CD8-positive, alpha-beta memory T cell (primary cell): ENCODE measurements at regions of chr16 and their contacts with region 1.

Region 1: DNA sequence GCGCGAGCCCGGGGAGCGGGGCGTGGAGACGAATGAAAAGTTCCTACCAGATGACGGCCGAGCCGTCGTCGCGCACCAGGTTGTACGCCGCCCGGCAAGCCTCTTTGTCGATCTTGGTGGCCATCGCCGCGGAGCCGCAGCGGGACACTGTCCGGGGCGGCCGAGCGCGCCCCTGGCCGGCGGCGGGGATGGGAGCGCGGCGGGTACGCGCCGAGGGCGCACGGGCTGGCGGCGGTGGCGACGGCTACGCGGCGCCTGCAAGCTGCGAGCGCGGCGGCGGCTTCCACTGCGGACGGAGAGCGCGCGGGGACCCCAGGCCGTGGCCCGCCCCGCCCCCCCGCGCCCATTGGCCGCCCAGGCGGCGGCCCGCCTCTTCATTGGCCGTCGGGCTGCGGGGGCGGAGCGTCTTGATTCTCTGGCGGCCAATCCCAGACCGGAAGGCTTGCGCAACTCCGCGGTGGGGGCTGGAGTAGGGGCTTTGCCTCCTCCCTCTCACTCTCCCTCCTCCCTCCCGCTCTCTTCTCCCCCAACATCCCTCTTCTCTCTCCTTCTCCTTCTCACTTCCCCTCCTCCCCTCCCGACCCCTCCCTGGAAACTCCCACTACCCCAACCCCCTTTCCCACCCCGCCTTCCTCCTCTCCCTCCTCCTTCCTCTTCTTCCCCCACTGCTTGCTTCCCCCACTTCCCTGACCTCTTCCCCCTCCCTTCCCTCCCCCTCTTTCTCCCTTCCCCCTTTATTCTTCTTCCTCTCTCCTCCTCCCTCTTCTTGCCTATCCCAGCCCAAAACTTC is at the start of gene COTL1:
- DNase-seq: peak; percentile 89 to 96 (median 91)
- H3K4me3 ChIP-seq: peak within 1 kb of the TSS; percentile 86
- H3K4me3 Mint-ChIP-seq: peak within 1 kb of the TSS; percentile 93 to 98 (median 96)
- H3K27ac ChIP-seq: peak within 1 kb of the TSS; percentile 81
- H3K27ac Mint-ChIP-seq: peak within 1 kb of the TSS; percentile 85 to 97 (median 92)
- H3K4me1 ChIP-seq: peaks cover 42% of the 10 kb centered on the region
- H3K4me1 Mint-ChIP-seq: peaks cover 45 to 54% (median 52%) of the 10 kb centered on the region in 3 donors
- H3K27me3 ChIP-seq: no peaks in the 10 kb centered on the region
- H3K27me3 Mint-ChIP-seq: peaks cover 0 to 3% of the 10 kb centered on the region in 2 donors
- total RNA-seq, gene COTL1: 373 to 388 TPM

Region 2: DNA sequence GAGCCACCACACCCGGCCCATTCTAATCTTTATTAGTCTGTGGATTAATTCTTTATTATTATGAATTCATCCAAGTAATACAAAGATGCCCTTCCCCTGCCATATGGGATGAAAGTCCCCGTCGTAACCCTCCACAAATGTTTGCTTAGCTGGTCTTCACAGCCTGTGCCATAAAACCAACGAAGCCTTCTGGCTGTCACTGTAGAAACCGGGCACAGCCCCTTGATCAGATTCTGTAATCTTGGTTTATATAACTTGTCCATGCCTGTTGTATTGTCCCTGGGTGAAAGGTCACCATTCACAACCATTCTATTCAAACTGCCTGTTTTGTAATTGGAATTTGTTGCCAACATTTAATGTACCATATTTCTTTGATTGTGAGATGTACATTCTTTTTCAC is 183.2 kb before region 1 on chr16:
- CTCF ChIA-PET with region 1: no interaction called
- POLR2A ChIA-PET with region 1: no interaction called
- DNase-seq: no peak
- H3K4me3 ChIP-seq: no peak overlapping the region
- H3K4me3 Mint-ChIP-seq: no peak overlapping the region
- H3K27ac ChIP-seq: no peak overlapping the region
- H3K27ac Mint-ChIP-seq: no peak overlapping the region
- H3K4me1 ChIP-seq: no peaks in the 10 kb centered on the region
- H3K4me1 Mint-ChIP-seq: no peaks in the 10 kb centered on the region
- H3K27me3 ChIP-seq: no peaks in the 10 kb centered on the region
- H3K27me3 Mint-ChIP-seq: peaks cover 18 to 20% of the 10 kb centered on the region in 2 donors

Region 3: DNA sequence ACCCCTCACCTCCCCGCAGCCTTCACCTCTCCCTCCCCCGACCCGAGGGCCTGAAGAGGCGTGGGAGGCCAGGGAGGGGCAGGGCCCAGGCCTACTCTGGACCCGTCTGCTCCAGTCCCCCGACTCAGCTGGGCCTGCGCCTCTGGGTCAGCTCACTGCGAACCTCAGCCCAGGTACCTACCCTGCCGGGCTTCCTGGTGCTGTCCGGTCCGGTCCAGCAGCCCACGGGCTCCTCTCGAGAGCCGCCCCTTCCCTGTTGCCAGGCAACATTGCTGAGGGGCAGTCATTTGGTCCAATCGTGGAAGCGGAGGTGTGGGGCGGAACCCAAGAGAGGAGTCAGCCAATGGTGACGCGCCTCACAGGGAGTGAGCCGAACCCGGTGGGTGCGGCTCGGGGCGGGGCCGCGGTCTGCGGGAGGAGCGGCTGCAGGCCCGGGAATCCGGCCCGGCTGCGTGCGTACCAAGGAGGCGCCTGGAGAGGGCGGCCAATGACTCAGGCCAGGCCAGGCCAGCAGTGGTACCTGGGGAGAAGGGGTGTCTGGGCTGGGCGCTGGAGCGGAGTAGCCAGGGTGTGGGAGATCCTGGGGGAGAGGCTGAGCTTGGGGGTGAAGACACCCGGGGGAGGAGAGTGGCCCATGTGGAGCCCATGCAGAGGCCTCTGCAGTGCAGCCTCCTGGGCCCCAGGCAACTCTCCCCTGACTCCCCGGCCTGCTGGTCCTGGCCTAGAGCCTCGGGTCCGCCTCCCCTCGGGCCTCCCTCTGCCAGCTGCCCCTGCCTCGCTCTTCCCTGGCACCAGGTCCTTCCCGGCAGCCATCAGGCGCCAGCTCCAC is 113.4 kb before region 1 on chr16 and contains the start of gene MEAK7:
- CTCF ChIA-PET with region 1: interaction called, 118 read pairs
- POLR2A ChIA-PET with region 1: interaction called, 5 read pairs
- DNase-seq: peak; percentile 94 to 98 (median 97)
- H3K4me3 ChIP-seq: peak within 1 kb of the TSS; percentile 95
- H3K4me3 Mint-ChIP-seq: peak within 1 kb of the TSS; percentile 83 to 96 (median 88)
- H3K27ac ChIP-seq: peak within 1 kb of the TSS; percentile 73
- H3K27ac Mint-ChIP-seq: peak within 1 kb of the TSS; percentile 6 to 97 (median 87)
- H3K4me1 ChIP-seq: peaks cover 56% of the 10 kb centered on the region
- H3K4me1 Mint-ChIP-seq: peaks cover 40 to 62% (median 52%) of the 10 kb centered on the region in 3 donors
- H3K27me3 ChIP-seq: no peaks in the 10 kb centered on the region
- H3K27me3 Mint-ChIP-seq: no peaks in the 10 kb centered on the region
- total RNA-seq, gene MEAK7: 6.7 to 7.7 TPM

Region 4: DNA sequence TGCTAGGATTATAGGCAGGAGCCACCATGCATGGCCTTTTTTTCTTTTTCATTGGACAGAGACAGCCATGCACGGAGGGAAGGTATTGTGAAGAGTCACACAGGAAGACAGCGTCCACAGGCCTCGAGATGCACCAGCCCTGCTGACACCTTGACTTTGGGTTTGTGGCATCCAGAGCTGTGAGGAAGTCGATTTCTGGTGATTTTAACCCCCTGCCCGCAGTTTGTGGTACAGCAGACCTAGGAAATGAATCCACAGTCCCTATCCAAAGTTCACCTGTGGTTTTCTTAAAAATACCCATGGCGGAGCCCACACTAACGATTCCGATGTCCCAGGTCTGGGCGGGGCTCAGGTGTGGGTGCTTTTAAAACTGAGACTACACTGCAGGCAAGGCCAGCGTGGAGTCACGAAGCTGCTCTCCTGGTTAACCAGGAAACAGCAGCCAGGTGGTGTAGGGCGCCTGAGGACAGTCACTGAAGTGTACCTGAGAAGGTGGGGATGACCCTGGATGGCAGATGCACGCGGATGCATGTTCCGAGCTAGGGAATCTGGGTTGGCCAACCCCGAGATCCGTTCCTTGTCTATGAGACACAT is 99.1 kb before region 1 on chr16:
- CTCF ChIA-PET with region 1: interaction called, 118 read pairs
- POLR2A ChIA-PET with region 1: interaction called, 9 read pairs
- DNase-seq: peak; percentile 45 to 86 (median 64)
- H3K4me3 ChIP-seq: peak overlapping the region; percentile 38
- H3K4me3 Mint-ChIP-seq: peak overlapping the region; percentile 7 to 80 (median 64)
- H3K27ac ChIP-seq: no peak overlapping the region
- H3K27ac Mint-ChIP-seq: peak overlapping the region; percentile 66 to 87 (median 78)
- H3K4me1 ChIP-seq: peaks cover 63% of the 10 kb centered on the region
- H3K4me1 Mint-ChIP-seq: peaks cover 55 to 69% (median 69%) of the 10 kb centered on the region in 3 donors
- H3K27me3 ChIP-seq: no peaks in the 10 kb centered on the region
- H3K27me3 Mint-ChIP-seq: no peaks in the 10 kb centered on the region

Region 5: DNA sequence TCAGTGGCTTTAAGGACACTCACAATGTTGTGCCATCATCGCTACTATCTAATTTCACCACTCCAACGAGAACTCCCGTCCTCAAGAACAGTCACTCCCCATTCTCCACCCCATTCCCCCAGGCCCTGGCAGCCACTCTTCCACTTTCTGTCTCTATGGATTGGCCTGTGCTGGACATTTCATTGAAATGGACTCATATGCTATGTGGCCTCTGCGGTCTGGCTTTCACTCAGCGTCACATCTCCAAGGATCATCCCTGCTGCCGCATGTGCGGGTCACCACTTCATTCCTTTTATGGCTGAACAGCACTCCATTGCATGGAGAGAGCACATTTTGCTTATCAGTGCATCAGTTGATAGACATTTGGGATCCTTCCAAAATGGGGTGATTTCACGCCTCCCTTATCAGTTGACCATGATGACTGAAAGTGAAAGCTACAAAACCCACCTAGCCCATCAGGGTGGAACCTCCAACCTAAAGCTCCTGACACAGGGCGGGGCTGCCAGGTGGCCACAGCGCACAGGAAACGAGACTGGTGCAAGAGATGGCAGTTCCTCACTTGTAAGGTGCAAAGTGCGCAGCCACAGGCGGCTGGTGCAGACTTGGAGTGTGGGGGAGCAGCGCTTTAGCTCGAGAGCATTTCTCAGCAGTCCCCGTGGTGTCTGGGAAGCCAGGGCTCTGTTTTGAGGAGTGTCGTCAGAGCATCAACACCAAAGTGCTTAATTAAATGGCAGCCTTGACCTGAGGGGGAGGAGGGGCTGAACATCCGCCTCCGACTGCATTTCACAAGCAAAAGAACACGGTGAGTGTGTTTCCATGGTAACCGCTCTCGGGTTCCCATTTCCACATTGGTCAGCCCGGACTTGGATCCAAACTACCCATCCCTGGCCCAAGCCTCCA is 23.9 kb before region 1 on chr16:
- CTCF ChIA-PET with region 1: interaction called, 53 read pairs
- POLR2A ChIA-PET with region 1: interaction called, 82 read pairs
- DNase-seq: peak; percentile 76 to 97 (median 83)
- H3K4me3 ChIP-seq: peak overlapping the region; percentile 53
- H3K4me3 Mint-ChIP-seq: peak overlapping the region; percentile 72 to 96 (median 88)
- H3K27ac ChIP-seq: peak overlapping the region; percentile 90
- H3K27ac Mint-ChIP-seq: peak overlapping the region; percentile 95 to 100 (median 99)
- H3K4me1 ChIP-seq: peaks cover 52% of the 10 kb centered on the region
- H3K4me1 Mint-ChIP-seq: peaks cover 64 to 85% (median 72%) of the 10 kb centered on the region in 3 donors
- H3K27me3 ChIP-seq: no peaks in the 10 kb centered on the region
- H3K27me3 Mint-ChIP-seq: peaks cover 0 to 3% of the 10 kb centered on the region in 2 donors

Region 6: DNA sequence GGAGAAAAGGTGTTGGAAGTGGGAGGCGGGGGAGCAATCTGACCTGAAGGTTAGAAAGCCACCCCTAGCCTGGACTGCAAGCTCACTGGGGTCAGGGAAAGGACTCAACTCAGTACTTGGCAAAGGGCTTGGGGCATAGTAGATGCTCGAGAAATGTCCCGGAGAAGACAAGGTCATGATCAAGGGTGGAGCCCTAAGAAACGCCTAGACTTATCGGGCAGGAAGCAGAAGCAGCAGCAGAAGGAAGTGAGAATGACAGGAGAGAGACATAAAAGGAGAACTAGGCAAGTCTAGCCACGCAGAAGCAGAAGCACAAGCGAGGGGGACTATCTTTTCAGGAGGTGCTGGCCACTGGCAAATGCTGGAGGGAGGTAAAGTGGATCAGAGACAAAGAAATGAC is 10.3 kb before region 1 on chr16:
- CTCF ChIA-PET with region 1: interaction called, 53 read pairs
- POLR2A ChIA-PET with region 1: interaction called, 82 read pairs
- DNase-seq: peak in 2 of 5 donors; percentile 48 to 54
- H3K4me3 ChIP-seq: peak overlapping the region; percentile 49
- H3K4me3 Mint-ChIP-seq: peak overlapping the region; percentile 59 to 88 (median 80)
- H3K27ac ChIP-seq: peak overlapping the region; percentile 36
- H3K27ac Mint-ChIP-seq: peak overlapping the region; percentile 86 to 97 (median 94)
- H3K4me1 ChIP-seq: peaks cover 96% of the 10 kb centered on the region
- H3K4me1 Mint-ChIP-seq: peaks cover 87 to 95% (median 95%) of the 10 kb centered on the region in 3 donors
- H3K27me3 ChIP-seq: no peaks in the 10 kb centered on the region
- H3K27me3 Mint-ChIP-seq: peaks cover 0 to 2% of the 10 kb centered on the region in 2 donors

Region 7: GRCh38 chr16:84738255-84739038 is 120.5 kb after region 1 on chr16:
- CTCF ChIA-PET with region 1: interaction called, 16 read pairs
- POLR2A ChIA-PET with region 1: no interaction called
- DNase-seq: peak; percentile 60 to 81 (median 67)
- H3K4me3 ChIP-seq: peak overlapping the region; percentile 44
- H3K4me3 Mint-ChIP-seq: peak overlapping the region in 6 of 7 donors; percentile 60 to 80 (median 75)
- H3K27ac ChIP-seq: no peak overlapping the region
- H3K27ac Mint-ChIP-seq: peak overlapping the region; percentile 1 to 89 (median 64)
- H3K4me1 ChIP-seq: peaks cover 26% of the 10 kb centered on the region
- H3K4me1 Mint-ChIP-seq: peaks cover 31 to 60% (median 51%) of the 10 kb centered on the region in 3 donors
- H3K27me3 ChIP-seq: no peaks in the 10 kb centered on the region
- H3K27me3 Mint-ChIP-seq: peaks cover 0 to 1% of the 10 kb centered on the region in 2 donors